Panc1 (cell line): ENCODE measurements at regions of chr4 and their contacts with region 1.

Region 1: DNA sequence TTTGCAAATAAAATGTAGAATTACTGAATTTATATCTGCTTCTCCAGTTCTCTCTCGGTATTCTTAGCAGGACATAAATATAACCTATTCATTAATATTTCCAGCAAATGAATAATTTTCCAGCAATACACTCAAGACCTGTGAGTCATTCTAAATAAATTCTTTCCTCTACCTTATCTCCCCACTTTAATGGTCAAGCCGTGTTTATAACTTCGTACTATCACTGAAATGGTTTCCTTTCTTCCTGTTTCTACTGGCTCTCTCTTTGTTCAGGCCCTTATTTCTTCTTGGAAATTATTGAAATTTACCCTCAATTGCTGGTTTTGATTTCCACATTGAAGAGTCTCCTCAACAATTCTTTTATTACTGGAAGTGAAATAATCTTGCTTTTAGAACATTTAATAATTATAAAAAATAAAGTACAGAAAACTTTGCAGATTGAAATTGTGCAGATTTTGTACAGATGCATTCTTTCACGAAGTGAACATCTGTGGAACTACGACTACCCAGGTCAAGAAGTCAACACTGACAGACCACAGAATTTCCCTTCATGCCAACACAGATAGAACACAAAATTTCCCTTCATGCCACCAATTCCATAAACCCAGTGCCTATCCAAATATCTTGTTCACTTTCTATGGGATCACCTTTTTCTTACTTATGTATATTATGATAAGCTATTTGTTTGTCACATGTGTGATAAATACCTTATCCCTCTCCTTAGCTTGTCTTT is 205.7 kb downstream of the FAT4 start:
- DNase-seq: no peak
- ATAC-seq: peak; percentile 75
- H3K4me3 ChIP-seq: no peak overlapping the region
- H3K27ac ChIP-seq: peak overlapping the region; percentile 63
- H3K4me1 ChIP-seq: peaks cover 8% of the 10 kb centered on the region
- H3K27me3 ChIP-seq: no peaks in the 10 kb centered on the region
- CTCF ChIP-seq: no peak

Region 2: GRCh38 chr4:125283707-125284279 is 236.6 kb before region 1 on chr4:
- CTCF ChIA-PET with region 1: no interaction called
- POLR2A ChIA-PET with region 1: no interaction called
- in situ Hi-C with region 1: no loop called
- intact Hi-C with region 1: no loop called
- DNase-seq: peak; percentile 2
- ATAC-seq: no peak
- H3K4me3 ChIP-seq: no peak overlapping the region
- H3K27ac ChIP-seq: no peak overlapping the region
- H3K4me1 ChIP-seq: no peaks in the 10 kb centered on the region
- H3K27me3 ChIP-seq: no peaks in the 10 kb centered on the region
- CTCF ChIP-seq: peak; percentile 41; the same call in 1 of the 2 replicates

Region 3: GRCh38 chr4:125728568-125728967 is 208.1 kb after region 1 on chr4:
- CTCF ChIA-PET with region 1: no interaction called
- POLR2A ChIA-PET with region 1: no interaction called
- in situ Hi-C with region 1: no loop called
- intact Hi-C with region 1: loop called (anchors 10 kb)
- DNase-seq: peak; percentile 94
- ATAC-seq: peak; percentile 93
- H3K4me3 ChIP-seq: no peak overlapping the region
- H3K27ac ChIP-seq: peak overlapping the region; percentile 89
- H3K4me1 ChIP-seq: peaks cover 29% of the 10 kb centered on the region
- H3K27me3 ChIP-seq: no peaks in the 10 kb centered on the region
- CTCF ChIP-seq: no peak

Region 4: GRCh38 chr4:125991398-125991797 is 471.0 kb after region 1 on chr4:
- CTCF ChIA-PET with region 1: no interaction called
- POLR2A ChIA-PET with region 1: no interaction called
- in situ Hi-C with region 1: no loop called
- intact Hi-C with region 1: no loop called
- DNase-seq: no peak
- ATAC-seq: no peak
- H3K4me3 ChIP-seq: no peak overlapping the region
- H3K27ac ChIP-seq: no peak overlapping the region
- H3K4me1 ChIP-seq: no peaks in the 10 kb centered on the region
- H3K27me3 ChIP-seq: no peaks in the 10 kb centered on the region
- CTCF ChIP-seq: no peak